ENCODE measurements at regions of chr6 and their contacts with region 1.

Region 1: GRCh38 chr6:155248008-155249001 is 15.5 kb upstream of the CLDN20 start:
- DNase-seq: peak; percentile 60
- ATAC-seq: peak; percentile 74
- H3K4me3 Mint-ChIP-seq: no peak overlapping the region
- H3K27ac Mint-ChIP-seq: peak overlapping the region; percentile 84
- H3K4me1 Mint-ChIP-seq: peaks cover 12% of the 10 kb centered on the region
- H3K27me3 Mint-ChIP-seq: no peaks in the 10 kb centered on the region
- CTCF ChIP-seq: peak; percentile 39

Region 2: DNA sequence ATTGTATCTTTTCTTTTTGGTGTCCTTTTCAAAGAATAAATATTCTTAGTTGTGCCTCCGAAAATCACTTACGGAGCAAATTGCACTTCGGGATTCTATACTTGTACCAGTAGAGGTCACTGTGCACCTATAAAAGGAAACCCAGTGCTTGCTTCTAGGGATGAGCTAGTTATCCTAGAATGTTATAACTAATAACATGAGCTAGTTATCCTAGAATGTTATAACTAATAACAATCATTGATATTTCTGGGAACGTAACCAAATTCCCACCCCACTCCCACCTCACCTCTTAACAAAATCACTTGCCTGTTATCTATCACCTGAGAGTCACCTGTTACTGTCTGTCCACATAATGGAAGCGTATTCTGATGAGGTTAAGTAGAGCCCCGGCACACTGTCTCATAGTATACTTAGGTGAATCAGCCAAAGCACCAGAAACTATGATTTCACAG is 380.1 kb before region 1 on chr6:
- CTCF ChIA-PET with region 1: interaction called, 13 read pairs
- POLR2A ChIA-PET with region 1: interaction called, 3 read pairs
- DNase-seq: no peak
- ATAC-seq: no peak
- H3K4me3 Mint-ChIP-seq: no peak overlapping the region
- H3K27ac Mint-ChIP-seq: no peak overlapping the region
- H3K4me1 Mint-ChIP-seq: peaks cover 18% of the 10 kb centered on the region
- H3K27me3 Mint-ChIP-seq: no peaks in the 10 kb centered on the region
- CTCF ChIP-seq: peak; percentile 63

Region 3: GRCh38 chr6:155106456-155107115 is 141.7 kb before region 1 on chr6:
- CTCF ChIA-PET with region 1: no interaction called
- POLR2A ChIA-PET with region 1: no interaction called
- DNase-seq: no peak
- ATAC-seq: no peak
- H3K4me3 Mint-ChIP-seq: no peak overlapping the region
- H3K27ac Mint-ChIP-seq: peak overlapping the region; percentile 45
- H3K4me1 Mint-ChIP-seq: peaks cover 26% of the 10 kb centered on the region
- H3K27me3 Mint-ChIP-seq: no peaks in the 10 kb centered on the region
- CTCF ChIP-seq: no peak

Region 4: DNA sequence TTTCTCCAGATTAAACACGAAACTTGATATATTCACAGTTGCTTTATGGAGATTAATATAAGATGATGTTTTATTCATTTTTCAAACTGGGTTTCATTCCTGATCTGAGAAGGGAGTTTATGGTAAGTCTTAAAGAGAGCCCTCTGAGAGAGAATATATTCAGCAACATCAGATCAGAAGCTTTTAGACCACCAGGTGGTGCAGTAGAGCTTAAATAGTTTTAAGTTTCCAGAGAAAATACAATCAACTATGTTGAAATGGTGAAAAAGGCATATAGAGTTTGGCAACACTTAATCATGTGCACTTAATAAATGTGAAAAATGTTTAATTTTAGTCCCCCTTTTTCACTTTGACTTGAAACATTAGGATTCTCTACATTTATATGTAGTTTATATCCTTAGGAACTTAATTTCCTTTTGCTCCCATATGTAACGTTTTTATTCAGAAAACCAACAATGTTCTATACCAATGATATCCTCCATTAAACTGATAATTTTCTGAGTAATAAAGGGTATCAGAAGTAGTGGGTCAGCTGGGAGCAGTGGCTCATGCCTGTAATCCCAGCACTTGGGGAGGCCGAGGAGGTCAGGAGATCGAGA is 70.8 kb before region 1 on chr6:
- CTCF ChIA-PET with region 1: interaction called, 63 read pairs
- POLR2A ChIA-PET with region 1: no interaction called
- DNase-seq: no peak
- ATAC-seq: peak; percentile 37
- H3K4me3 Mint-ChIP-seq: no peak overlapping the region
- H3K27ac Mint-ChIP-seq: no peak overlapping the region
- H3K4me1 Mint-ChIP-seq: peaks cover 14% of the 10 kb centered on the region
- H3K27me3 Mint-ChIP-seq: no peaks in the 10 kb centered on the region
- CTCF ChIP-seq: peak; percentile 31; the same call in 1 of the 2 replicates

Region 5: DNA sequence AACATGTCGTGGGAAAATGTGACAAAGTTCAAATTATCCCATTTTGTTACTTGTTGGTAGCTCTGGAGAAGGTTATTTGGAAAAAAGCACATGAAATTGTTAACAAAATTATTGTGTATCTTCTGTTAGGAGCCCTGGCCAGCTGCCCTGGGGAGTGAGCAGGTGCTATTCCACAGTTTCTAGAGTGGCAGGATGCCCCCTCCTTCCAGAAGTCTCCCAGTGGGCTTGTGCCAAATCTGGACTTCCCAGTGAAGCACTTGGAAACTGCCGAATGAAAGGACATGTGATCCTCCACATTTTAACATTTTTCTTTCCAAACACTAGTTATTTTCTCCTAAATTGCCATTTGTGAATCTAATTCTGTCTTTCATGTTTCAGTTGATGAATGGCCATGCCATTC is 51.4 kb before region 1 on chr6:
- CTCF ChIA-PET with region 1: interaction called, 31 read pairs
- POLR2A ChIA-PET with region 1: no interaction called
- DNase-seq: no peak
- ATAC-seq: no peak
- H3K4me3 Mint-ChIP-seq: no peak overlapping the region
- H3K27ac Mint-ChIP-seq: no peak overlapping the region
- H3K4me1 Mint-ChIP-seq: 0 out of 2 replicates have a peak, but pooled peaks cover 4% of the 10 kb centered on the region
- H3K27me3 Mint-ChIP-seq: no peaks in the 10 kb centered on the region
- CTCF ChIP-seq: no peak

Region 6: DNA sequence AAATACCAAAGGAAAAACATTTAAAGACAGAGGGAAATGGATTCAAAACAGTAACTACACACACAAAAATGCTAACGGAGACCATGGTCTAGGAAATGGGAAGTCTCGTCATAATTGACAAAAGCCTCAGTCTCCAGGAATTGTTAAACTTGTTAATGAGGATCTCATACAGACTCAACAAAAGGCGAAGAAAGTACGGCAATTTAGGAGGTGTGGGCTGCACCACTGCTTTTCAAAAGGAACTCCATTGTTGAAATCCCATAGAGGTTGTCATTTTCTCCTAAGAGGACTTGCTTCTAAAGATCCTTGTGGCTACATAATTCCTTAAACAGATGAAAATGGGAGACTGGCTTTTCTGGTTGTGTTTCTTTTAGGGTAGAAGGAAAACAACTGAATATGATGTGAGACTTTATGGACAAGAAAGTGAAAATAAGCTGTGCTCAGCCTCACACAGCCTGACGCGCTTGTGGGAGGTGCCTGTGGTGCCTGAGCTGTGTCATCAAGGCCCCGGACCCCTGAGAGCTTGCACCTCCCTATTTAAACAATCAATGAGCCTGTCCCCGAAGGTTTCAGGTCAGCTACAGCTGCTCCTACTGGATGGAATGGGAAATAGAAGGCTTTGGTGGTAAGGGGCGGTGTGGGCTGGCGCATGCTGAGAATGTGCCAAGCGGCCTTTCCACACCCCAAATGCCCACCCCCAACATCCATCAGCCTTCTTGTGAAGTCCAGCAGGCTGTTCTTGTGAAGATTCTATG is 13.0 kb after region 1 on chr6:
- CTCF ChIA-PET with region 1: interaction called, 16 read pairs
- POLR2A ChIA-PET with region 1: no interaction called
- DNase-seq: peak; percentile 40
- ATAC-seq: peak; percentile 94
- H3K4me3 Mint-ChIP-seq: no peak overlapping the region
- H3K27ac Mint-ChIP-seq: peak overlapping the region; percentile 81
- H3K4me1 Mint-ChIP-seq: peaks cover 31% of the 10 kb centered on the region
- H3K27me3 Mint-ChIP-seq: no peaks in the 10 kb centered on the region
- CTCF ChIP-seq: no peak

Region 7: GRCh38 chr6:155314092-155314772 is 65.9 kb after region 1 on chr6 and contains the start of gene TFB1M:
- CTCF ChIA-PET with region 1: no interaction called
- POLR2A ChIA-PET with region 1: no interaction called
- DNase-seq: peak; percentile 99
- ATAC-seq: peak; percentile 99
- H3K4me3 Mint-ChIP-seq: peak within 1 kb of the TSS; percentile 97
- H3K27ac Mint-ChIP-seq: peak within 1 kb of the TSS; percentile 98
- H3K4me1 Mint-ChIP-seq: peaks cover 12% of the 10 kb centered on the region
- H3K27me3 Mint-ChIP-seq: no peaks in the 10 kb centered on the region
- CTCF ChIP-seq: no peak
- total RNA-seq, gene TFB1M: 40.7 to 43.6 TPM (median 41.8 TPM) in 3 replicates

Region 8: GRCh38 chr6:155561257-155561965 is 313.1 kb after region 1 on chr6:
- CTCF ChIA-PET with region 1: no interaction called
- POLR2A ChIA-PET with region 1: no interaction called
- DNase-seq: no peak
- ATAC-seq: no peak
- H3K4me3 Mint-ChIP-seq: no peak overlapping the region
- H3K27ac Mint-ChIP-seq: no peak overlapping the region
- H3K4me1 Mint-ChIP-seq: peaks cover 6% of the 10 kb centered on the region
- H3K27me3 Mint-ChIP-seq: no peaks in the 10 kb centered on the region
- CTCF ChIP-seq: no peak

Measured in WTC11 (cell line).